ENCODE measurements at regions of chr2 and their contacts with region 1.

Region 1: GRCh38 chr2:42663106-42663780 is 94.8 kb downstream of the MTA3 start:
- DNase-seq: peak; percentile 78
- ATAC-seq: peak; percentile 94
- H3K4me3 ChIP-seq: peak overlapping the region in 1 of 5 experiments; percentile 2
- H3K4me3 Mint-ChIP-seq: peak overlapping the region; percentile 2
- H3K27ac ChIP-seq: peak overlapping the region in 1 of 2 donors; percentile 63
- H3K27ac Mint-ChIP-seq: peak overlapping the region; percentile 21
- H3K4me1 ChIP-seq: peaks cover 16 to 18% of the 10 kb centered on the region in 2 donors
- H3K4me1 Mint-ChIP-seq: peaks cover 15% of the 10 kb centered on the region
- H3K27me3 ChIP-seq: no peaks in the 10 kb centered on the region
- H3K27me3 Mint-ChIP-seq: no peaks in the 10 kb centered on the region
- CTCF ChIP-seq: peak; percentile 99

Region 2: GRCh38 chr2:42494355-42495233 is 168.6 kb before region 1 on chr2:
- CTCF ChIA-PET with region 1: interaction called, 89 read pairs
- POLR2A ChIA-PET with region 1: interaction called, 5 read pairs
- intact Hi-C with region 1: loop called (anchors 1 kb)
- DNase-seq: peak; percentile 84
- ATAC-seq: peak; percentile 69
- H3K4me3 ChIP-seq: peak overlapping the region; percentile 46 to 62 (median 52)
- H3K4me3 Mint-ChIP-seq: peak overlapping the region; percentile 92
- H3K27ac ChIP-seq: no peak overlapping the region
- H3K27ac Mint-ChIP-seq: peak overlapping the region; percentile 12
- H3K4me1 ChIP-seq: peaks cover 11 to 14% of the 10 kb centered on the region in 2 donors
- H3K4me1 Mint-ChIP-seq: peaks cover 10% of the 10 kb centered on the region
- H3K27me3 ChIP-seq: peaks cover 0 to 33% (median 24%) of the 10 kb centered on the region in 4 experiments
- H3K27me3 Mint-ChIP-seq: peaks cover 25% of the 10 kb centered on the region
- CTCF ChIP-seq: peak; percentile 94

Region 3: GRCh38 chr2:42568401-42569115 is 94.7 kb before region 1 on chr2 and contains the start of gene MTA3:
- CTCF ChIA-PET with region 1: interaction called, 7 read pairs
- POLR2A ChIA-PET with region 1: no interaction called
- intact Hi-C with region 1: loop called (anchors 2 kb)
- DNase-seq: peak; percentile 74
- ATAC-seq: peak; percentile 67
- H3K4me3 ChIP-seq: peak within 1 kb of the TSS; percentile 26 to 80 (median 70)
- H3K4me3 Mint-ChIP-seq: peak within 1 kb of the TSS; percentile 96
- H3K27ac ChIP-seq: peak within 1 kb of the TSS; percentile 18 to 67
- H3K27ac Mint-ChIP-seq: peak within 1 kb of the TSS; percentile 90
- H3K4me1 ChIP-seq: peaks cover 21 to 26% of the 10 kb centered on the region in 2 donors
- H3K4me1 Mint-ChIP-seq: peaks cover 31% of the 10 kb centered on the region
- H3K27me3 ChIP-seq: no peaks in the 10 kb centered on the region
- H3K27me3 Mint-ChIP-seq: no peaks in the 10 kb centered on the region
- CTCF ChIP-seq: no peak
- total RNA-seq, gene MTA3: 33.2 and 40.1 TPM in 2 replicates

Region 4: DNA sequence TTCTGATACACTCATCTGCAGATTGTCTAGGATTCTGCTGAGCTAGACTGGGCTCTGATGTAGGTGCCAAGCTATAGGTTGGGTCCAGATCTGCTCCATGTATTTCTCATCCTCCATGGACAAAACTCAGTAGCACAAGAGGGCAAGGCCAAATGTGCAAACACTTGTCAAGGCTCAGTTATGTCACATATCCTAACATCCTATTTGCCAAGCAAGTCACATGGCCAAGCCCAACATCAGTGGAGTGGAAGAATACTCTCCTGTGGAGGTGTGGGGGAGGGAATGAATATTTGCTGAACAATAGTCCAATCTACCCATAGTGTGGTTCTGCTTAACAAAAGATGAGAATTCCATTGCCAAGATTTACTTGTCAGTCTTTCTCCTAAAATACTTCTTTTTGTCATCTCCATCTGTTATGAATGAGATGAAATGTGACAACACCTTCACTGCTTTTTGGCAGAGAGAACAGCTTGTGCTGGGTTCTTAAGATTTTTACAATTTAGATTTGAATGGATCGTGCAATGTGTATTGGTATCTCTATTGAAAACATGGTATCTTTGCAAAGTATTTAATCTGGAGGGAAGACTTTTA is 10.8 kb after region 1 on chr2:
- CTCF ChIA-PET with region 1: interaction called, 14 read pairs
- POLR2A ChIA-PET with region 1: no interaction called
- intact Hi-C with region 1: no loop called
- DNase-seq: no peak
- ATAC-seq: no peak
- H3K4me3 ChIP-seq: no peak overlapping the region
- H3K4me3 Mint-ChIP-seq: no peak overlapping the region
- H3K27ac ChIP-seq: no peak overlapping the region
- H3K27ac Mint-ChIP-seq: no peak overlapping the region
- H3K4me1 ChIP-seq: peaks cover 0 to 2% of the 10 kb centered on the region in 2 donors
- H3K4me1 Mint-ChIP-seq: peaks cover 8% of the 10 kb centered on the region
- H3K27me3 ChIP-seq: no peaks in the 10 kb centered on the region
- H3K27me3 Mint-ChIP-seq: no peaks in the 10 kb centered on the region
- CTCF ChIP-seq: no peak

Measured in B cell (primary cell).